ENCODE measurements at regions of chr3 and their contacts with region 1.

Region 1: DNA sequence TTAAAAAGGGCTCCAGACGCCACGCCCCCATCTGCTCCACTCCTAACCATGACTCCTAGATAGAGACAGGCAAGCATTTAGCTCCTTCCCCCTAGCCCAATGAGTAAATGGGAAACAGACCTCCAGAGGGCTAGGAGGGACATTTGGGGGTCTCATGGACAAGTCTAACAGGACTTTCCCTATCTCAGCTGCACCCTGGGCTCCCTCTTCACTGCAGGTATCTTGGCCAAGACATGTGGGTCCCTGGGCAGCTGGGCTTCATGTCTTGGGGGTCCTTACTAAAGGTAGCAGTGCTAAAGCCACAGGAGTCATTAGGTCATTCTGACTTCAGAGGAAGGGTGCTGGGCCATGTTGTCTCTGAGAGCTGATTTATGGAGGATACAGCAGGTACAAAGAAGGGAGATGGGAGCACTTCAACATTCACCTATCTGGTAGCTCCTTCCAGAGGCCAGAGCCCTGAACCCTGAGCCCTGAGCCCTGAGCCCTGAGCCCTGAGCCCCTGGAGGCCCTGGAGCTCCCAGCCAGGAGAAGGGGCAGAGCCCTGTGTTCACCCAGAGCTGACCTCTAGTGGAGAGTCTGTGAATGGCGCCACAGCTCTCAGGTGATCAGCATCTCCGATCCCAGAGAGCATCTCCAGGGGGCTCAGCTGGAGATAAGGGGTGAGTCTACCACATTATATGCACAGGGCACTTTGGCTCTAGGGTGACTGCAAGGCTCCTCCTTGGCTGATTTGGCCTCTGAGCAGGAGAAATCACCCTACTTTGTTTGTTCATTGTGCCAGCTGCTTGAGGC is 40.1 kb upstream of the EPHB1 start:
- DNase-seq: peak; percentile 85
- ATAC-seq: peak; percentile 97
- H3K4me3 Mint-ChIP-seq: no peak overlapping the region
- H3K27ac Mint-ChIP-seq: no peak overlapping the region
- H3K4me1 Mint-ChIP-seq: no peaks in the 10 kb centered on the region
- H3K27me3 Mint-ChIP-seq: no peaks in the 10 kb centered on the region; the same call in 1 of the 2 replicates
- CTCF ChIP-seq: peak; percentile 75

Region 2: GRCh38 chr3:134769287-134769868 is 14.4 kb after region 1 on chr3:
- CTCF ChIA-PET with region 1: interaction called, 15 read pairs
- POLR2A ChIA-PET with region 1: no interaction called
- DNase-seq: no peak
- ATAC-seq: no peak
- H3K4me3 Mint-ChIP-seq: no peak overlapping the region
- H3K27ac Mint-ChIP-seq: no peak overlapping the region
- H3K4me1 Mint-ChIP-seq: no peaks in the 10 kb centered on the region
- H3K27me3 Mint-ChIP-seq: no peaks in the 10 kb centered on the region
- CTCF ChIP-seq: no peak